OCI-LY7 (cell line): ENCODE measurements at regions of chr9 and their contacts with region 1.

Region 1: DNA sequence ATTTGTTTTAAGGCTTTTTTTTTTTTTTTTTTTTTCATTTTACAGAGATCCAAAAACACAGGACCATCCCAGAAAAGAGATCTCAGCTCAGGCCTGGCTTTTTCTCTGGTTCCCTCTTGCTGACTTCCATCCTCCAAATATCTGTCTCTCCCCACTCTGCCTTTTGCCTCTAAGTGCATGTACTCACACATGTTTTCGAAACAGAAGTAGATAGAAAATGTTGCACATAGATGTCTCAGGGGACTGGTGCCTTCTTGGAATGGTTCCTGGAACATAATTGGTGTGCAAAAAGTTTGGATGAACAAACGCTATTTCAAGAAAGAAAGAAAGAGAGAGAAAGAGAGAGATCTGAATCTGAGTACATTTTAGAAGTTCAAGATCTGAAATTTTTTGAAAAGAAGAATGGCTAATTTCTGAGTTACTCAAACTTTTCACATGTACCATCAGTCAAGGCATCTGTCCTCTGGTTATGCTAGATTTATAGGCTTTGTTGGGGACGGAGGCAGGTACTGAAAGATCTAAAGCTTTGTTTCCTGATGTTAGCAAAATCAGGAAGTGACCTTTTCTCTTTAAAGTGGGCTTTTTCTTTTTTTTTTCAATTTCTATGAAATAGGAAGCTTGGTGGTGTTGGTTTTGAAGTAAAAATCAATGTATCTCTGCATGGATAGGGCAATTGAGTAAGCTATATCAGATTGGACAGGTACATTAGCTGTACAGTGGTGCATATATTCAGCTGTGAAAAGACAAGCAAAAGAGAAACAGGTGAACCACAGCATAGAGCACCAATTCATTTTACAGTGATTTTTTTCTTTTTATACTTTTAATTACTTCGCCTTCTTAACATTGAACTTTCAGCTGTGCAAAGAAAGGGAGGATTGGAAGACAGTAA is 8.5 kb upstream of the TNFSF8 start:
- DNase-seq: peak; percentile 51
- H3K4me3 ChIP-seq: no peak overlapping the region
- H3K27ac ChIP-seq: no peak overlapping the region
- H3K4me1 ChIP-seq: peaks cover 13% of the 10 kb centered on the region
- CTCF ChIP-seq: no peak

Region 2: GRCh38 chr9:114953917-114954316 is 15.0 kb after region 1 on chr9:
- CTCF ChIA-PET with region 1: no interaction called
- POLR2A ChIA-PET with region 1: interaction called, 11 read pairs
- intact Hi-C with region 1: no loop called
- DNase-seq: no peak
- H3K4me3 ChIP-seq: no peak overlapping the region
- H3K27ac ChIP-seq: no peak overlapping the region
- H3K4me1 ChIP-seq: peaks cover 22% of the 10 kb centered on the region
- CTCF ChIP-seq: no peak